Activated naive CD4-positive, alpha-beta T cell treated with anti-CD3 and anti-CD28 coated beads for 36 hours (primary cell): ENCODE measurements at regions of chr20 and their contacts with region 1.

Region 1: GRCh38 chr20:33810885-33811777 is at the start of gene CHMP4B:
- DNase-seq: peak; percentile 99
- H3K4me3 Mint-ChIP-seq: peak within 1 kb of the TSS; percentile 87
- H3K27ac Mint-ChIP-seq: peak within 1 kb of the TSS; percentile 87
- H3K4me1 Mint-ChIP-seq: peaks cover 42% of the 10 kb centered on the region
- H3K27me3 Mint-ChIP-seq: no peaks in the 10 kb centered on the region
- total RNA-seq, gene CHMP4B: 68.9 to 69.7 TPM

Region 2: GRCh38 chr20:33443512-33444239 is 367.5 kb before region 1 on chr20 and contains the start of gene SNTA1:
- CTCF ChIA-PET with region 1: no interaction called
- intact Hi-C with region 1: loop called (anchors 1 kb)
- DNase-seq: peak; percentile 88
- H3K4me3 Mint-ChIP-seq: peak within 1 kb of the TSS; percentile 84
- H3K27ac Mint-ChIP-seq: peak within 1 kb of the TSS; percentile 46
- H3K4me1 Mint-ChIP-seq: peaks cover 10% of the 10 kb centered on the region
- H3K27me3 Mint-ChIP-seq: no peaks in the 10 kb centered on the region
- total RNA-seq, gene SNTA1: 2.6 to 2.9 TPM

Region 3: DNA sequence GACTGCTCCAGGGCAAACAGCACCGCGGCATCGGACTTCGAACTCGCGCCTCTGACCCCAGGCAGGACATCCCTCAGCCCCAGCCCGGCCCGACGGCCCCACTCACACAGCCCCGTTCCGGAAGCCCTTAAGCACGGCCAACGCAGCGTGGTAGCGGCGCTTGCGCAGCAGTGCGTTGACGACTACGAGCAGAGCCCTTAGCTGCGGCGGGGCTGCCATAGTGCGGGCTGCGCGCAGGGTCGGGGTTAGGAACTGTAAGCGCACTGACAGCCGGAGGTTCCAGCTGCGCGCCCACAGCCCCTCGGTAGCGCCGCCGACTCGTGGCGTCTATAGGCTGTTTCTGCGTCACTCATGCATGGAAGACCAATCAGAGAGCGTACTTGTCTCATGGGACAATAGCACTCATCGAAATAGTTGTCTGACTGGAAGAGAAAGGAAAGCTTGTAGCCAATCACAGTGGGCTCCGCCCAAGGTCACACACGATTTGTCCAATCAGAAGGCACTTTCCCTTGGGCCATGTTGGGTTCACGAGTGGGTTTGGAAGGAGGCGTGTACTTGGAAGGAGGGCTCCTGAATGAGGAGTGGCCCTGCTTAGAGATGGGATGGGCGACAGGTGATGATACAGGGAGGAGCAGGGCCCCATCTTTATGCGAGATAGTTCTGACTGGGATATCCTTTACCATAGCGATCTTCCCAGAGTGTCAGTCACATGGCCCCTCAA is 91.0 kb before region 1 on chr20 and contains the start of gene PXMP4:
- CTCF ChIA-PET with region 1: no interaction called
- intact Hi-C with region 1: loop called (anchors 1 kb)
- DNase-seq: peak; percentile 95
- H3K4me3 Mint-ChIP-seq: peak within 1 kb of the TSS; percentile 79
- H3K27ac Mint-ChIP-seq: peak within 1 kb of the TSS; percentile 76
- H3K4me1 Mint-ChIP-seq: peaks cover 21% of the 10 kb centered on the region
- H3K27me3 Mint-ChIP-seq: no peaks in the 10 kb centered on the region
- total RNA-seq, gene PXMP4: 9.5 to 10.3 TPM

Region 4: GRCh38 chr20:33791959-33792597 is 19.1 kb before region 1 on chr20:
- CTCF ChIA-PET with region 1: interaction called, 14 read pairs
- intact Hi-C with region 1: no loop called
- DNase-seq: peak; percentile 60
- H3K4me3 Mint-ChIP-seq: no peak overlapping the region
- H3K27ac Mint-ChIP-seq: no peak overlapping the region
- H3K4me1 Mint-ChIP-seq: no peaks in the 10 kb centered on the region
- H3K27me3 Mint-ChIP-seq: no peaks in the 10 kb centered on the region

Region 5: DNA sequence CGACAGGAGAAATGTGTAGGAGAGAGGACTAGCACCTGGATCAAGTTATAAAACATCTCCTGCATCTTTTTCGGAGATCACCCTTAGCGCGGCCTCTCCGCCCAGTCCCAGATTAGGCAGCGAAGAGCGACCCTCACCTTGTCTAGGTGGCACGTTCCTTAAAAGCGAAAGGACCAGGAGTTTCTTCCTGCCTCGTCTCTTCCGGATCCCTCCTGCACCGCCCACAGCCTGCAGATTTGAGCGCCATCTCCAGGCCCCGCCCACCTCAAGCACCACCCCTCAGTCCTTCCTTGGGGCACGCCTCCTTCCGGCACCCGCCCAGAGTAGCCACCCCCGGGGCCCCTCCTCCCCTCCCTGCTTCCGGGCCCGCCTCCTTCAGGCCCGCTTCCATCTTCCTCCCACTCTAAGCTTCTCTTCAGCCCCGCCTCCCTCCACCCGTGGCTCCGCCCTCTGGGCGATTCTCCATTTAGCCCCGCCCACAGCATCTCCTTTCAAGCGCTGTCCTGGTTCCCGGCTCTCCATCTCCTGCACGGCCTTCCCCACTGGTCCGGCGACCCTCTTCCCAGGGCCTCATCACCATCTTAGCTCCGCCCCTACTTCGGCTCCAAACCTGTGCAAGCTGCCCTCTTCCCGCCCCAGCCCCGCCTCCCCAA is 181.9 kb after region 1 on chr20:
- CTCF ChIA-PET with region 1: no interaction called
- intact Hi-C with region 1: loop called (anchors 1 kb)
- DNase-seq: peak; percentile 100
- H3K4me3 Mint-ChIP-seq: peak overlapping the region; percentile 90
- H3K27ac Mint-ChIP-seq: peak overlapping the region; percentile 98
- H3K4me1 Mint-ChIP-seq: peaks cover 46% of the 10 kb centered on the region
- H3K27me3 Mint-ChIP-seq: no peaks in the 10 kb centered on the region

Region 6: DNA sequence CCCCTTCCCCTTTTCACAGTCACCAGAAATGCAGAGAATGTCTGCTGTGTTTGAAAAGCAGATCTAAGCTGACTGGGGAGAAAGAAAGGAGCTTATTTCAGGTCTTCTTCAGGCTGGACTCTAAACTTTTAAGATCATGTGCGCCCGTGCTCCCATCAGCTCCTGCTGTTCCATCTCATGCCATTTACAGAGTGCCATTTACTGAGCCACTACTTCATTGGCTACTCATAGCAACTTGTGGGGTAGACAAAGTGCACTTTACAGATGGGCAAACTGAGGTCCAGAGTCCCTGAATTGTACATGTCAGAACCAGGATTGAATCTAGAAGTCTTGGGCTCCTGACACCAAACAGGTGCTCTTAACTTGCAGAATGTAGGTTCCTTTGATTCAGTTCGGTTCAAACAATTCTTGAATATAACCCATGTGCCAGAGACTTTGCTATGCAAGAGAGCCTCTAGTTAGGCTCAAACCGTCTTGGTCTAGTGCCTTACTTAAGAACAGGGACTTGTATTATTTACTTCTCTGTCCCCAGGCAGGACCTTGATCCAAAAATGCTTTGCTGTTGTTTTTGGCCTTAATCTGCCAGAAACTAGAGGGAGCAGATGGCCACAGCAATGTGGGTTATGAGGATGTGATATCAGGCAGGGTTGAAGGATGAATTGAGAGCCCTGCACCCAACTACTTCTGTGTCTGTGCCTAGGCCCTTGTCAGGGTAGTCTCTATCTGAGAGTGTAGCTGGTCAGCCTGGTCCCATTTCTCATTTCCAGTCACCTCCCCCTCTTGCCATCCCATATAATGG is 239.0 kb after region 1 on chr20:
- CTCF ChIA-PET with region 1: no interaction called
- intact Hi-C with region 1: no loop called
- DNase-seq: no peak
- H3K4me3 Mint-ChIP-seq: no peak overlapping the region
- H3K27ac Mint-ChIP-seq: no peak overlapping the region
- H3K4me1 Mint-ChIP-seq: peaks cover 63% of the 10 kb centered on the region
- H3K27me3 Mint-ChIP-seq: no peaks in the 10 kb centered on the region

Region 7: GRCh38 chr20:34363062-34363464 is 551.9 kb after region 1 on chr20 and contains the start of gene ITCH:
- CTCF ChIA-PET with region 1: no interaction called
- intact Hi-C with region 1: loop called (anchors 2 kb)
- DNase-seq: peak; percentile 96
- H3K4me3 Mint-ChIP-seq: peak within 1 kb of the TSS; percentile 97
- H3K27ac Mint-ChIP-seq: peak within 1 kb of the TSS; percentile 95
- H3K4me1 Mint-ChIP-seq: peaks cover 34% of the 10 kb centered on the region
- H3K27me3 Mint-ChIP-seq: no peaks in the 10 kb centered on the region
- total RNA-seq, gene ITCH: 35.3 to 40.0 TPM